ENCODE measurements at regions of chr18 and their contacts with region 1.

Region 1: GRCh38 chr18:24362758-24363157 is 34.9 kb downstream of the OSBPL1A start:
- DNase-seq: no peak
- ATAC-seq: no peak
- H3K4me3 Mint-ChIP-seq: no peak overlapping the region
- H3K27ac Mint-ChIP-seq: no peak overlapping the region
- H3K4me1 Mint-ChIP-seq: no peaks in the 10 kb centered on the region
- H3K27me3 Mint-ChIP-seq: no peaks in the 10 kb centered on the region
- CTCF ChIP-seq: no peak

Region 2: DNA sequence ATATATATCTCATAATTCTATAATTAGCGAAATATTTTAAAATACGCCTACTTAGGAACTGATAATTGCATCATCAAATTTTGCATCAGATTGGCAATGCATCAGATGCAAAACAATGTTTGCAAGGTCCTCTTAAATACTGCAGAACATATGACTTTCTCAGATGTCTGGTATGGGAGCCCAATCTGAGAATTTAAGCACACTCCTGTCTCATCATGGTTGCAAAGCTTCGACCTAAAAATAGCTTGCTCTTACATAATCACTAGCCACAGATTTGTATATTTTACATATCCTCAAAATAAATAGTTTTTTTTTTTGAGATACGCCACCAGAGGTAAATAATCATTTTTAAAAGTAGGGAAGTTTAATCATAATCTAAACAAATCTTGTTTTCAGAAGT is 100.7 kb before region 1 on chr18:
- CTCF ChIA-PET with region 1: no interaction called
- POLR2A ChIA-PET with region 1: no interaction called
- intact Hi-C with region 1: no loop called
- DNase-seq: no peak
- ATAC-seq: no peak
- H3K4me3 Mint-ChIP-seq: no peak overlapping the region
- H3K27ac Mint-ChIP-seq: no peak overlapping the region
- H3K4me1 Mint-ChIP-seq: no peaks in the 10 kb centered on the region
- H3K27me3 Mint-ChIP-seq: no peaks in the 10 kb centered on the region
- CTCF ChIP-seq: no peak

Region 3: DNA sequence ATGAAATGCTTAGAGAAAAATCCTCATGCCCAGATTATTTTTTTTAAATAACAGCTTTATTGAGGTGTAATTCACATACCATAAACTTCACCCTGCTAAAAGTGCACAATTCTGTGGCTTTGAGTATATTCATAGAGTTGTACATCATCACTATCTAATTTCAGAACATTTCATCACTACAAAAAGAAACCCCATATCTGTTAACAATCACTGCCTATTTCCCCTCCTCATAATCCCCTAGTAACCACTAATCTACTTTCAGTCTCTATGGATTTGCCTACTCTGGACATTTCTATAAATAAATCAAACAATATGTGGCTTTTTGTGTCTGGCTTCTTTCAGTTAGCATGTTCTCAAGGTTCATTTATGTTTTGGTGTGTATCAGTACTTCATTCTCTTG is 16.5 kb before region 1 on chr18:
- CTCF ChIA-PET with region 1: interaction called, 15 read pairs
- POLR2A ChIA-PET with region 1: interaction called, 3 read pairs
- intact Hi-C with region 1: no loop called
- DNase-seq: no peak
- ATAC-seq: no peak
- H3K4me3 Mint-ChIP-seq: no peak overlapping the region
- H3K27ac Mint-ChIP-seq: no peak overlapping the region
- H3K4me1 Mint-ChIP-seq: no peaks in the 10 kb centered on the region
- H3K27me3 Mint-ChIP-seq: peaks cover 2% of the 10 kb centered on the region
- CTCF ChIP-seq: no peak

Region 4: GRCh38 chr18:24428708-24429107 is 66.0 kb after region 1 on chr18:
- CTCF ChIA-PET with region 1: interaction called, 15 read pairs
- POLR2A ChIA-PET with region 1: no interaction called
- intact Hi-C with region 1: no loop called
- DNase-seq: no peak
- ATAC-seq: no peak
- H3K4me3 Mint-ChIP-seq: no peak overlapping the region
- H3K27ac Mint-ChIP-seq: no peak overlapping the region
- H3K4me1 Mint-ChIP-seq: peaks cover 23% of the 10 kb centered on the region
- H3K27me3 Mint-ChIP-seq: peaks cover 2% of the 10 kb centered on the region
- CTCF ChIP-seq: no peak